AG04450 (cell line): ENCODE measurements at regions of chr17 and their contacts with region 1.

Region 1: DNA sequence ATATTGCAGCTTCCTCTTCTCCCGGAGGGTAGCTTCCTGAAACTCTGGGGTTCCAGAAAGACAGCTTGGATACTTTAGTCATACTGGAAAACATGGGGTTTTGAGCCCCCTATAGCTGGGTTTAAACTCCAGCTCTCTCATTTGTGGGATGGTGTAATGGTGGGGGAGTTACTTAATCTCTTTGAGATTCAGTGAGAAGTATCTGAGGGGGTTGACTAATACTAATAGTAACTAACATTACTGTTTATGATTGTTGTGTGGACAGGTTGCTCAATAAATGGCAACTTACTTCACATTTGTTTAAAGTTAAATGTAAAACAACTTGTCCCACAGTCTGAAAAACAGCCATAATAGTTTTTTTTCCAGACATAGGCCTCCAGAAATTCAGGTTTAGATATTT is 5.1 kb upstream of the SUZ12 start:
- DNase-seq: no peak
- H3K4me3 ChIP-seq: no peak overlapping the region
- H3K27ac ChIP-seq: no peak overlapping the region
- H3K27me3 ChIP-seq: no peaks in the 10 kb centered on the region
- CTCF ChIP-seq: no peak

Region 2: DNA sequence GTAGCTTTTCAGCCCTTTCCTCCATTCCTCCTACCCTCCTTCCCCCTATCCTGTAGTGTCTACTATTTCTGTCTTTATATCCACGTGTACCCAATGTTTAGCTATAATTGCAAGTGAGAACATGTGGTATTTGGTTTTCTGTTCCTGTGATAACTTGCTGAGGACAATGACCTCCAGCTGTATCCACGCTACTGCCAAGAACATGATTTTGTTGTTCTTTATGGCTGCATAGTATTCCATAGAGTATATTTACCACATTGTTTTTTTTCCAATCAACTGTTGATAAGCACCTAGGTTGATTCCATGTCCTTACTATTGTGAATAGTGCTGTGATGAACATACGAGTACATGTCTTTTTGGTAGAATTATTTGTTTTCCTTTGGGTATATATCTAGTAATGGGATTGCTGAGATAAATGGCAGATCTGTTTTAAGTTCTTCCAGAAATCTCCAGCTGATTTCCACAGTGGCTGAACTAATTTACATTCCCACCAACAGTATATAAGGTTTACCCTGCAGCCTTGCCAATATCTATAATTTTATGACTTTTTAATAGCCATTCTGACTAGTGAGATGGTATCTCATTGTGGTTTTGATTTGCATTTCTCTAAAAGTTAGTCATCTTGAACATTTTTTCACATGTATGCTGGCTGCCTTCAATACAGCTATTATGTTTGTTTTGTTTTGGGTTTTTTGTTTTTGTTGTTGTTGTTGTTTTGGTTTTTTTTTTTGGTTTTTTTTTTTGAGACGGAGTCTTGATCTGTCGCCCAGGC is 61.8 kb before region 1 on chr17:
- CTCF ChIA-PET with region 1: no interaction called
- POLR2A ChIA-PET with region 1: no interaction called
- DNase-seq: no peak
- H3K4me3 ChIP-seq: no peak overlapping the region
- H3K27ac ChIP-seq: no peak overlapping the region
- H3K27me3 ChIP-seq: no peaks in the 10 kb centered on the region
- CTCF ChIP-seq: no peak

Region 3: DNA sequence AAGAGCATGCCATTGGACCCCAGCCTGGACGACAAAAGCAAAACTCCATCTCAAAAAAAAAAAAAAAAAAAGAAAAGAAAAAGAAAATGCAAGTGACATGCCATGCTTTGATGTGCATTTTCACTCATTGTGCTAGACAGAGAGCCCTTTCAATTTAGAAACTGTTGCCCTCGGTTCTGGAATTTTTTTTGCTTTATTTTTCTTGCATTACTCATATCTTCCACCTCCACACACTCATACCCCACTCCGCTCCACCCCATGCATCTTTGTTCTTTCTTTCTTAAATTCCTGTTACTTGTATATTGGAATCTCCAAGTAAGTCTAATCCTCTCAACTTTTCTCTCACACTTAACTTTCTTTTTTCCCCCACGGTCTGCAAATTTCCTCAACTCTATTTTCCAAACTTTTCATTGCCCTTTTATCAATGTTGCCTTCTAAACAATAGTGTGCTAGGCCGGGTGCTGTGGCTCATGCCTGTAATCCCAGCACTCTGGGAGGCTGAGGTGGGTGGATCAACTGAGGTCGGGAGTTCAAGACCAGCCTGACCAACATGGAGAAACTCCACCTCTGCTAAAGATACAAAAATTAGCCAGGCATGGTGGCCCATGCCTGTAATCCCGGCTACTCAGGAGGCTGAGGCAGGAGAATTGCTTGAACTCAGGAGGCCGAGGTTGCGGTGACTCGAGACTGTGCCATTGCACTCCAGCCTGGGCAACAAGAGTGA is 11.8 kb before region 1 on chr17:
- CTCF ChIA-PET with region 1: interaction called, 14 read pairs
- POLR2A ChIA-PET with region 1: no interaction called
- DNase-seq: peak; percentile 34
- H3K4me3 ChIP-seq: no peak overlapping the region
- H3K27ac ChIP-seq: peak overlapping the region; percentile 80
- H3K27me3 ChIP-seq: no peaks in the 10 kb centered on the region
- CTCF ChIP-seq: no peak